BJ (cell line): ENCODE measurements at regions of chr1 and their contacts with region 1.

Region 1: DNA sequence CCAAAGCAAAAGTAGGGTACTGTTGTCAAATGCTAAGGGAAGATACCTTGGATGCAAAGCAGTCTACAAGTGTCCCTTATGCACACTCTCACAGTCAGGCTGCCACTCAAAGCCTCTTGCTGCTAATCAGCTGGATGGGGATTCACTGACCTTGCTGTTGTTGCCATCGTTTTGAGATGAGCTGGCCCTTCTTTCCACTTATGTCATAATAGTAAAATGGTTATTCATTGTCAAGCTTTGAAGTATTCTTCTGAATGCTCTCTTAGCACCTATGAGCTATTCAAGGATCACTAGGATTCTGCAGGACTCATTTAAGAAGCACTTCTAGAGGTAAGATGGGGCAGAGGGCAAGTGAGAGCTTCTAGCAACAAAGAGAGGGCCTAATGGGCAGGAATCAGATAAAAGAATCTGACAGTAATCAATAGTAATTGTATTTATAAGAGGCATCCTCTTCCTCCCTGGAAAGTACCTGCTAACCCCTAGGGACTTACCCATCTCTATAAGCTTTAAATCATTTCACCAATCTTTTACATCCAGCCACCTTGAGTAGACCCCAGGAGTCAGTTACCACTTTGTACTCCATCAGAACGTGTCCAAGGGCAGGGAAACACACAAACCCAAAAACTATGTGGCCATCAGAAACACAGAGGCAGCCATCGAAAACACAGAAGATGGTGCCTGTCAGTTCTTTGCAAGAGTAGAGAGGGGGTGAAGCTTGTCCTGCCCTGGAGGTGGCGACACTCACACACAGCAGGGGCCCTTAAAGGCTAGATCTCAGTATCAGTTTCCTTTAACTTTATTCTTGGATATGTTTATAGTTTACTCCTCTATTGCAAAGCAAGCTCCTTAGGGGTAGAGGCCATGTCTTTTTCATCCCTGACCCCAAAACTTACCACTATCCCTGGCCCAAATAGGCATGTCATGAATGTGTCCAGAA is 103.7 kb upstream of the NFIA start:
- DNase-seq: no peak
- H3K4me3 ChIP-seq: no peak overlapping the region
- H3K27me3 ChIP-seq: no peaks in the 10 kb centered on the region
- CTCF ChIP-seq: peak; percentile 78

Region 2: GRCh38 chr1:60960891-60961461 is 17.7 kb before region 1 on chr1:
- CTCF ChIA-PET with region 1: no interaction called
- POLR2A ChIA-PET with region 1: no interaction called
- DNase-seq: no peak
- H3K4me3 ChIP-seq: no peak overlapping the region
- H3K27me3 ChIP-seq: no peaks in the 10 kb centered on the region
- CTCF ChIP-seq: no peak

Region 3: GRCh38 chr1:60989749-60990713 is 11.3 kb after region 1 on chr1:
- CTCF ChIA-PET with region 1: interaction called, 10 read pairs
- POLR2A ChIA-PET with region 1: no interaction called
- DNase-seq: peak; percentile 81
- H3K4me3 ChIP-seq: no peak overlapping the region
- H3K27me3 ChIP-seq: no peaks in the 10 kb centered on the region; the same call in 1 of the 2 replicates
- CTCF ChIP-seq: no peak

Region 4: GRCh38 chr1:61056573-61057439 is 78.1 kb after region 1 on chr1:
- CTCF ChIA-PET with region 1: no interaction called
- POLR2A ChIA-PET with region 1: no interaction called
- DNase-seq: no peak
- H3K4me3 ChIP-seq: peak overlapping the region; percentile 45
- H3K27me3 ChIP-seq: peaks cover 4% of the 10 kb centered on the region
- CTCF ChIP-seq: no peak

Region 5: DNA sequence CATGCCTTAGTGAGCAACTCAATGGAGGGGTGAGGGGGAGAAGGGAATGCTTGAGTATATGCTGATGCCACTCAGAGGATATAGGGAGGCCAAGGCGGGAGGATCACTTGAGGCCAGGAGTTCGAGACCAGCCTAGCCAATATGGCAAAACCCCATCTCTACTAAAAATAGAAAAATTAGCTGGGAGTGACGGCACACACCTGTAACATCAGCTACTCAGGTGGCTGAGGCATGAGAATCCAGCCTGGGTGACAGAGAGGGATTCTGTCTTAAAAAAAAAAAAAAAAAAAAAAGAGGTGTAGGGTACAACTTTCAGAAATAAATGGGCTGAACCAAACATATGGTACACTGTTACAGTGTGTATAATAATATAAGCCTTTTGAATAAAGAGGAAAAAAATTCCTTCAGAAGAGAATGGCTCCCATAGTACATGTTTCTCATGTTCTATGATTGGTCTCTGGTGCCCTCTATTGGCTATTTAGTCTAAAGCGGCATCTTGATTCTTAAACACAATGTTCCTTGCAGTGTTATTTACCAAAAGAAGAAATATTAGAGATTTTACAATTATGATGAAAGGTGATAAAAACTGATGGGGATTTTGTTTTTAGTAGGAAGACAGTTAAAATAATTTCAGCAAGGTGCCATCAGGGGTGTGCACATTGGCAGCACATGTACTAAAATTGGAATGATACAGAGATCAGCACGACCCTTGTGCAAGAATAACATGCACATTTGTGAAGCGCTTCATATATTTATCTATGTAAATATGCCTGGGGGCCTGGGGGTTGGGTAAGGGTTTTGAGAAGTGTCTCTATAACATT is 873.4 kb after region 1 on chr1:
- CTCF ChIA-PET with region 1: interaction called, 10 read pairs
- POLR2A ChIA-PET with region 1: no interaction called
- DNase-seq: no peak
- H3K4me3 ChIP-seq: no peak overlapping the region
- H3K27me3 ChIP-seq: no peaks in the 10 kb centered on the region
- CTCF ChIP-seq: peak; percentile 70